ENCODE measurements at regions of chr12 and their contacts with region 1.

Region 1: DNA sequence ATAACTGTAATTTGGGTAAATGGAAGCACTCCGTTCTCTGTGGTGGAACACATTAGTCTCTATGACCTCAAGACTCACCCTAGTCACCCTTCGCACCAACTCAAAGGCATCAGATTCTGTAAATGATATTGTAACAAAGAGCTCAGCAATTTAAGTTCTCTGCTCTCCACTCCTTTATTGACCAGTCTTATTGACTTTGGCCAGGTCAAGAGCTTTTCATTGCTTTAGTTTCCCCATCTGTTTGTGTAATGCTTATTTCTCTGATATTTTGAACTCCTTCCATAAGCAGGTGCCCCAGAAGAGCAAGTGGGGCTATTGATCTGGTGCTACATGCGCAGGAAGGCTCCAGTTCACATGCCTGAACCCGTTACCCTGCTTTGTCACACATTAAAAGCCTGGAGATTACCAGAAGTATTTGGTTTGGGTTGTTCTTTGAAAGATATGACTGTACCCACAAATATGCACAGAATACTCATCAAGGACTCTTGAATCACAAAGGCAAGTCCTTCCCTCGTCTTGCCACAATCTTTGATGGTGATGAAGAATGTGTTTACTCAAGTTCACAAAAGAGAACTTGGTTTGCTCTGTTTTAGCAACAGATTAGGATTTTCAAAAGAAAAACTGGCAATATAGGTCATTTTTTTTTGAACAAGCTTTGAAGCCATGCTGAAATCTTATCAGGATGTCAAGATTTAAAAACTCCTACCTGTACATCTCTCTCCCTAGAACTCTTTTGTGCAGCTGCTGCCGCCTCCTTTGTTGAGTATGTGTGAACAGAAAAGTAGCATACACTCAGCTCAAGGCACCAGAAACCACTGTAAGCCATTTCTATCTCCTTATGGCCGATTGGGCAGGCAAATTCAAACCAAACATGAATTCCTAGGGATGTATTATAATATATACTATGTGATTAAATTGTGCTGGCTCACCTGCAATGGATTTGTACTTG is 193.9 kb downstream of the BCAT1 start:
- DNase-seq: peak; percentile 47
- ATAC-seq: peak; percentile 92
- H3K4me3 Mint-ChIP-seq: no peak overlapping the region
- H3K27ac Mint-ChIP-seq: peak overlapping the region; percentile 84
- H3K4me1 Mint-ChIP-seq: peaks cover 31% of the 10 kb centered on the region
- H3K27me3 Mint-ChIP-seq: peaks cover 16% of the 10 kb centered on the region

Region 2: GRCh38 chr12:24719293-24719721 is 35.7 kb before region 1 on chr12:
- CTCF ChIA-PET with region 1: interaction called, 3 read pairs
- POLR2A ChIA-PET with region 1: no interaction called
- intact Hi-C with region 1: loop called in 1 of 2 experiments (anchors 1 kb)
- DNase-seq: peak; percentile 77
- ATAC-seq: peak; percentile 93
- H3K4me3 Mint-ChIP-seq: no peak overlapping the region
- H3K27ac Mint-ChIP-seq: peak overlapping the region; percentile 87
- H3K4me1 Mint-ChIP-seq: peaks cover 33% of the 10 kb centered on the region
- H3K27me3 Mint-ChIP-seq: peaks cover 8% of the 10 kb centered on the region

Region 3: GRCh38 chr12:24742378-24742777 is 12.6 kb before region 1 on chr12:
- CTCF ChIA-PET with region 1: interaction called, 3 read pairs
- POLR2A ChIA-PET with region 1: no interaction called
- intact Hi-C with region 1: loop called in 1 of 2 experiments (anchors 1 kb)
- DNase-seq: peak; percentile 63
- ATAC-seq: peak; percentile 83
- H3K4me3 Mint-ChIP-seq: no peak overlapping the region
- H3K27ac Mint-ChIP-seq: peak overlapping the region; percentile 32
- H3K4me1 Mint-ChIP-seq: peaks cover 25% of the 10 kb centered on the region
- H3K27me3 Mint-ChIP-seq: no peaks in the 10 kb centered on the region

Region 4: GRCh38 chr12:24767016-24767415 is 12.1 kb after region 1 on chr12:
- CTCF ChIA-PET with region 1: interaction called, 4 read pairs
- POLR2A ChIA-PET with region 1: no interaction called
- intact Hi-C with region 1: loop called in 1 of 2 experiments (anchors 1 kb)
- DNase-seq: peak; percentile 27
- ATAC-seq: peak; percentile 60
- H3K4me3 Mint-ChIP-seq: no peak overlapping the region
- H3K27ac Mint-ChIP-seq: no peak overlapping the region
- H3K4me1 Mint-ChIP-seq: peaks cover 11% of the 10 kb centered on the region
- H3K27me3 Mint-ChIP-seq: peaks cover 4% of the 10 kb centered on the region

Measured in activated CD4-positive, alpha-beta T cell treated with anti-CD3 and anti-CD28 coated beads for 36 hours (primary cell).